PC-3 (cell line): ENCODE measurements at regions of chrX and their contacts with region 1.

Region 1: GRCh38 chrX:139932901-139933796 is at the start of gene ATP11C:
- DNase-seq: peak; percentile 80
- ATAC-seq: peak; percentile 64
- H3K4me3 ChIP-seq: peak within 1 kb of the TSS; percentile 89
- H3K27ac ChIP-seq: peak within 1 kb of the TSS; percentile 82
- H3K4me1 ChIP-seq: peaks cover 15% of the 10 kb centered on the region
- H3K27me3 ChIP-seq: no peaks in the 10 kb centered on the region
- CTCF ChIP-seq: no peak
- total RNA-seq, gene ATP11C: 25.8 and 34.8 TPM in 2 replicates

Region 2: DNA sequence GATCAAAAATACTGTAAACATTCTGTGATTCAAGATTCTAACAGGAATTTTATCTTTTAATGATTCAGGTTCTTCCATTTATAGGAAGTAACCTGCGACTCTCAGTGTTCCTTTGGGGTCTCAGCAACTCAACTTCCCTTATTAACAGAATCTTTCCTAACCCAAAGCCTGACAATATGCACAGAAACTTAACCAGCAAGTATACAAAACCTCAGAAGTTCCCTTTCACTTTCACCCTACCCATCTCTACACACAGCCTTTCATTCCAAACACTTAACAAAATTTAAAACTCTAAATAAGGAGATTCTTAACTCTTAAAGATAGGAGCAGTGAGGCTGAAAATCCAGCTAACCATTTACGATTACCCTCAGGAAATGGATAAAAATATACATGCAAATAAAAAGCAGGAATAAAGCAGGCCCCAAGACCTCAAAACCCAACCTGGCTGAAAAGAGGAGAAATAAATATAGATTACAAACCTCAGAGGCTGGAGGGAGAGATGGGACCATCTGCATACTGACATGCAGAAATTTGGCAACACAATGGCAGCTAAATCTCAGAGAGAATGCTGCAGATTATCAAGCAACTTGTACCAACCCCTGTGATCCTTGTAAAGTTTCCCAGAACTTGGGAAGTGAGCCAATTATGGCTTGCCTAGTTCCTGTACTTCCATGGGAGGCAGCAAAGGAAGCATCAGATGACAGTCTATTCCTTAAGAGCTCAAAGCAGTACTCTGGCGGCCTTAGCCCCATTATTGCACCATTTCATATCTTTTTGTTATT is 101.3 kb before region 1 on chrX:
- CTCF ChIA-PET with region 1: no interaction called
- POLR2A ChIA-PET with region 1: no interaction called
- intact Hi-C with region 1: loop called (anchors 2 kb)
- DNase-seq: peak; percentile 67
- ATAC-seq: peak; percentile 84
- H3K4me3 ChIP-seq: no peak overlapping the region
- H3K27ac ChIP-seq: no peak overlapping the region
- H3K4me1 ChIP-seq: peaks cover 17% of the 10 kb centered on the region
- H3K27me3 ChIP-seq: no peaks in the 10 kb centered on the region
- CTCF ChIP-seq: no peak

Region 3: DNA sequence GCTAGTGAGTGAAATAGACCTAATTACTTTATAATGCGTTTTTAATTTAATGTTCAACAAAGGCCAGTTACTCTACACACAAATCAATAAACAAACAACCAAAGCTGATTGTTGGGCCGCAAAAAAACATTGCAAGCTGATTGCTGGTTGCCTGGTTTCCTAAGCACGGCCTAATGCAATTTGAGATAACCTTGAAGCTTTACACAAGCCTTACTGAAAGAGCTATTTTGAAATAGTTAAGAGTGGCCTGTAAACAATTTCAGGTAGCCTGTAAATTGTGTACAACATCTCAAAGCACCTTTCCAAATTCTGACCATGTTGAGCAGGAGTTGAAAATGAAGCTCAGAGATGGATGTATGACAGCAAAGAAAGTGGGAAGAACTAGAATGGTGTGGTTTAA is 49.7 kb after region 1 on chrX:
- CTCF ChIA-PET with region 1: no interaction called
- POLR2A ChIA-PET with region 1: no interaction called
- intact Hi-C with region 1: no loop called
- DNase-seq: no peak
- ATAC-seq: no peak
- H3K4me3 ChIP-seq: no peak overlapping the region
- H3K27ac ChIP-seq: no peak overlapping the region
- H3K4me1 ChIP-seq: no peaks in the 10 kb centered on the region
- H3K27me3 ChIP-seq: no peaks in the 10 kb centered on the region
- CTCF ChIP-seq: no peak

Region 4: DNA sequence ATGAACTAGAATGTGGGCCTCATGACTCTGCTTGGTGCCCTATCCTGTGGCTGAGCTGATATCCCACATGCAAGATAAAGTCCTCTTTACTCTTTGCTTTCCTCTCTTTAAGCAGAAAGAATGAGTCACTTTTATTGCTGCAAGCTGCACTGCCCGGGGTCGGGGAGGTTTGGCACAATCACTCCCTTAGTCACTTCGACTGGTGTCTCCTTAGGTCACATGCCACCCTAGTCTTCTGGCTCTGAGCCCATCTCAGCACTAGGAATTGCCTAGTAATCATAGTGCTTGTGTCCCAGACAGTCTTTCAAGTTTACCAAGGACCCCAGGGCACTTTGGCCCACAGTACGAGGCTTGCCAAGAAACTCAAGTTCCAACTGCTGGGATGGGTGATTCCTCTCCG is 107.3 kb after region 1 on chrX:
- CTCF ChIA-PET with region 1: no interaction called
- POLR2A ChIA-PET with region 1: no interaction called
- intact Hi-C with region 1: no loop called
- DNase-seq: peak; percentile 86
- ATAC-seq: peak; percentile 58
- H3K4me3 ChIP-seq: no peak overlapping the region
- H3K27ac ChIP-seq: no peak overlapping the region
- H3K4me1 ChIP-seq: 0 out of 2 replicates have a peak, but pooled peaks cover 4% of the 10 kb centered on the region
- H3K27me3 ChIP-seq: no peaks in the 10 kb centered on the region
- CTCF ChIP-seq: no peak